CD8-positive, alpha-beta T cell (primary cell): ENCODE measurements at regions of chr12 and their contacts with region 1.

Region 1: GRCh38 chr12:31702047-31702446 is 26.8 kb downstream of the AMN1 start:
- DNase-seq: peak in 1 of 9 experiments; percentile 19
- ATAC-seq: no peak
- H3K4me3 ChIP-seq: no peak overlapping the region
- H3K4me3 Mint-ChIP-seq: no peak overlapping the region
- H3K27ac ChIP-seq: no peak overlapping the region
- H3K27ac Mint-ChIP-seq: no peak overlapping the region
- H3K4me1 ChIP-seq: peaks cover 4% of the 10 kb centered on the region
- H3K4me1 Mint-ChIP-seq: peaks cover 24% of the 10 kb centered on the region
- H3K27me3 ChIP-seq: no peaks in the 10 kb centered on the region
- H3K27me3 Mint-ChIP-seq: no peaks in the 10 kb centered on the region
- CTCF ChIP-seq: no peak

Region 2: GRCh38 chr12:31645924-31646323 is 56.1 kb before region 1 on chr12:
- CTCF ChIA-PET with region 1: no interaction called
- POLR2A ChIA-PET with region 1: no interaction called
- intact Hi-C with region 1: no loop called
- DNase-seq: no peak
- ATAC-seq: no peak
- H3K4me3 ChIP-seq: no peak overlapping the region
- H3K4me3 Mint-ChIP-seq: no peak overlapping the region
- H3K27ac ChIP-seq: no peak overlapping the region
- H3K27ac Mint-ChIP-seq: no peak overlapping the region
- H3K4me1 ChIP-seq: no peaks in the 10 kb centered on the region
- H3K4me1 Mint-ChIP-seq: no peaks in the 10 kb centered on the region
- H3K27me3 ChIP-seq: no peaks in the 10 kb centered on the region
- H3K27me3 Mint-ChIP-seq: no peaks in the 10 kb centered on the region
- CTCF ChIP-seq: no peak

Region 3: GRCh38 chr12:31742891-31743290 is 40.8 kb after region 1 on chr12:
- CTCF ChIA-PET with region 1: no interaction called
- POLR2A ChIA-PET with region 1: no interaction called
- intact Hi-C with region 1: loop called in 1 of 2 experiments (anchors 5 kb)
- DNase-seq: peak in 2 of 9 experiments; percentile 36 to 56
- ATAC-seq: peak; percentile 51
- H3K4me3 ChIP-seq: no peak overlapping the region
- H3K4me3 Mint-ChIP-seq: no peak overlapping the region
- H3K27ac ChIP-seq: no peak overlapping the region
- H3K27ac Mint-ChIP-seq: peak overlapping the region; percentile 77
- H3K4me1 ChIP-seq: peaks cover 34% of the 10 kb centered on the region
- H3K4me1 Mint-ChIP-seq: peaks cover 67% of the 10 kb centered on the region
- H3K27me3 ChIP-seq: no peaks in the 10 kb centered on the region
- H3K27me3 Mint-ChIP-seq: no peaks in the 10 kb centered on the region
- CTCF ChIP-seq: no peak